ENCODE measurements at regions of chr11 and their contacts with region 1.

Region 1: DNA sequence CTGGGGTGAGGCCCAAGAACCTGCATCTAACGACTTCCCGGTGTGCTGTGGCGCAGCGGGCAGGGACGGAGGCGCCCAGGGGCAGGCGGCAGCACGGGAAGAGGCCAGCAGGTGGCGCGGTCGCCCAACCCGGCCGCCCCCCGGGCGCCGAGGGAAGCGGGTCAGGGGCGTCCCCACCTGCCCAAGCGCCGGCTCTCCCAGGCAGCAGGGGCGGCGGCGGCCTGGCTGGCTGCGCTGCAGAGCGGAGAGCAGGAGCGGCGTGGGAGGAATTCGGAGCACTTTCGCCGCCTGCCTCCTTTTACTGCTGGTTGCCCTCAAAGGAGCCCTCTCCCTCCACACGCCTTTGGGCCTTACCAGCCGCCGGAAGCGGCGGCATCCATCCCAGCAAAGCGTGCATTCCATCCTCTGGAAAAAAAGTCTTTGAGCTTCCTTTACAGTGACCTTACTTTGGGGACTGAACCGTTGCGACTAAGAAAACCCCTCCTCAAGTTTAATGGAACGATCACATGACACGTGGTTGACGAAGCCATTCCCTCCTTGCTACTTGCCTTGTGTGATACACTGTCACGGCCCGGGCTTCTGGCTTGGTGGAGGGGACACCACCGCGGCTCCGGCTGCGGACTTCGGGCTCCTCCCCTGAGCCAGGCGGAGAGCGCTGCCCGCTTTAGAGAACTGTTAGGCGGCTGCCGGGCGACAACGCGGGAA is 106.8 kb upstream of the CLMP start:
- DNase-seq: peak; percentile 58
- ATAC-seq: peak; percentile 93 to 94

Region 2: DNA sequence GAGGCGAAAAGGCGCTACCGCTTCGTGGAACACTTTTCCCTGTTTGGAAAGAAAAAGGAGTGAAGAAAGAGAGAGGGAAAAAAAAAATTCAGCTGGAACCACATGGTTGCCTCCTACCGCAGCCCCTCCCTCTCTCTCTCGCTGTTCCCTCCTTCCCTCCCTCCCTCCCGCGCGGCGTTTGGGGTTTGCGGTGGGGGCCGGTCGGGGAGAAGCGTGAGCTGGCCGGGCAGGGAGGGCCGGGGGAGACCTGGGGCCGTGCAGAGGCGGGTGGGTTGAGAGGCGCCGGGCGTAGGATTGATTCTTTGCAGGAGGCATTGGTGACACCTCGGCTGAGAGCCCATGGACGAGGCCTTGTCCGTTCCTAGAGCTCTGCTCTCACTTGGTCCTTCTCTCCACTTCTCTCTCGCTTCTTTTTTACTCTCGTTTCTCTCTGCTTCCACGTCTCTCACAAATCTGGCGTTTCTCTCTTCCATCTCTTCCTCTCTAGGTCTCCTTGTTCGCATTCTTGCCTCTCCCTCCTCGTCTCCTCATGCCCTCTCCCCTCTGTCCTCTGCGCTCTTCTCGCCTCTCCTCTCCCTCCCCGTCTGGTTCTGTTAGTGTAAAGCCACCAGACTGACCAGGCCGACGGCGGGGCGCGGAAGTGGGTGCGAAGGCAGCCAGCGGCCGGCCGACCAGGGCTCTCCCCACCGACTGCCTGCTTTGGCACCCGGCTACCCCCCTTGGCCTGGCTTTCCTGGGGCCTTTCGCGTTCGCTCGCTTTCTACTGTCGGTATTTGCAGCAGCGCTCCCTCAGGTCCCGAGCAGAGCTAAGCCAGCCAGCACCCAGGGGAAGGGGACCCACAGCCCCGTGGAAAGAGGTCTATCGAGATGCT is 106.4 kb before region 1 on chr11 and contains the start of gene CLMP:
- intact Hi-C with region 1: no loop called
- DNase-seq: peak; percentile 57
- ATAC-seq: peak; percentile 76 to 85
- total RNA-seq, gene CLMP: 30.6 to 38.6 TPM

Region 3: DNA sequence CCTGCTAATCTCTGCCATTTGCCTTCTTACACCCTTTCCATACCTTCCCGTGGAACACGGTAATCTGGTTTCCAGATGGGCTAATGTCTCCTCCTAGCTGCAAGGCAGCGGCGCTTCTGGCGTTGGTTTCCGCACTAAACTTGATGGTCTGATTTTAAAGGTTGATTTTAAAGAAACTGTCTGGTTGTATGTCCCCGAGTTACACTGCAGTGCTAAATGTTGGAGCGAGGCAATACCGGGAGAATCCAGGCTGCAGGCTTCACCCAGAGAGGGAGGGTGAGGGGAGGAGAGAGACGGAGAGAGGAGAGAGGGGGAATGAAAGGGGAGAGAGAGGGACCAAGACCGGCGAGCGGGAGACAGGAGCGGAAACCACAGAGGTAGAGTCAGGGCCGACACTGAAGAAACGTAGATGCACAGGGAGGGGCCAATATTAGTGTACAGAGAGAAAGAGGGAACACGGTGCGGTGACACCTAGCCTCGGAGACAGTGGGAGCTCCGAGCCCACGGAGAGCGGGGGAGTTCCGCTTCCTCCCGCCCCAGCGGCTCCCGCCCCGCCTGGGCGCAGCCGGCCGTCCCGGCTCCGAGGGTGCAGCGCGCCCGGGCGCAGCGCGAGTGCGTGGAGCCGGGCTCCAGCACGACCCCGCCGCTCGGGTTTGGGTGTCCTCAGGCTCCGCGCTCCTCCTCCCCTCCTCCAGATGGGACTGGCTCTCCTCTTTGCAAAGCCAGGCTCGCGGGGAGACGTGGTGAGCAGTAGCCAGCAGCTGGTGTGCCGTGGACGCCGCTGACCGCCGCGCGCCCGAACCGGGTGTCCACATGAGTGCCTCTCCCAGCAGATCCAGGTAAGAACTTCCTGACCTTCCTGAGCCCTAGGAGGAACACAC is 56.4 kb after region 1 on chr11:
- intact Hi-C with region 1: loop called in 1 of 2 experiments (anchors 2 kb)
- DNase-seq: no peak
- ATAC-seq: peak; percentile 63 to 70

Region 4: GRCh38 chr11:123373754-123374621 is 72.1 kb after region 1 on chr11:
- intact Hi-C with region 1: no loop called
- DNase-seq: no peak
- ATAC-seq: no peak

Region 5: DNA sequence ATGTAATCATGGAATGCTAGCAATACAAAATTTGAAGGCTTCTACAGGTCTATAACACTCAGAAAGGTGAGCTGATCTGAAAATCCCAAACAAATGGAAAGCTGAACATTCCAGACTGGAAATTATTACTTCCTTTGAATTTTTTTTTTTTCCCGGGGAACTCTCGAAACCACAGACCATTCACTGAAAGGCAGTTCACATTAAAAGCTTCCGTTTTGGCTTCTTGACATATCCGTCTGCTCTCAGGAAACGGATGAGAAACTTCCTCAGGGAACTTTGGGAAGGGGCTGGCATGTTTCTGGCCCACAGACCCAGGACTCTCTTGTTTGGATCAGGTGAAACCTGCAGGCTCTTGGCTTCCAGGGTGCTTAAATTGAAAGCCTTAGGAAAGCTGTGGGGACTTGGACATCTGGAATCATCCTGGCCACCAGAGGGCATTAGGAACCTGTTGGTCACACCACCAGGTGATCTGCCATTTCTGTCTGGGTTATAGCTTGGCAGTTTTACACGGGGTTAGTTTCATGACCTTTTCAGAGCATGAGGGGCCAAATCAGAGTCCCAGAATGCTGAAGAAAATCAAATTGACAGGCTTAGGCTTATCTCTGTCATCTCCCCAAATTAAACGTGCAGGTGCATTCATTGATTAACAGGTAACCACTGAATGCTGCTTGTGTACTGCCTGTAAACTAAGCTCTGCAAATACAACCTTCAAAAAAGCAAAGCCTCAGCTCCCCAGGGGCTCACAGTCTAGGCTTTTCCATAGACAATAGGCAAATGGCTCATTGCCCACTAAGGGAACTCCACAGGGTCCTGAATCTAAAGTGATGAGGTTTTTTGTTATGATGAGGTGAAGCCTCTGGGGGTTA is 105.5 kb after region 1 on chr11:
- intact Hi-C with region 1: loop called in 1 of 2 experiments (anchors 10 kb)
- DNase-seq: peak; percentile 68
- ATAC-seq: peak; percentile 55 to 60

Region 6: DNA sequence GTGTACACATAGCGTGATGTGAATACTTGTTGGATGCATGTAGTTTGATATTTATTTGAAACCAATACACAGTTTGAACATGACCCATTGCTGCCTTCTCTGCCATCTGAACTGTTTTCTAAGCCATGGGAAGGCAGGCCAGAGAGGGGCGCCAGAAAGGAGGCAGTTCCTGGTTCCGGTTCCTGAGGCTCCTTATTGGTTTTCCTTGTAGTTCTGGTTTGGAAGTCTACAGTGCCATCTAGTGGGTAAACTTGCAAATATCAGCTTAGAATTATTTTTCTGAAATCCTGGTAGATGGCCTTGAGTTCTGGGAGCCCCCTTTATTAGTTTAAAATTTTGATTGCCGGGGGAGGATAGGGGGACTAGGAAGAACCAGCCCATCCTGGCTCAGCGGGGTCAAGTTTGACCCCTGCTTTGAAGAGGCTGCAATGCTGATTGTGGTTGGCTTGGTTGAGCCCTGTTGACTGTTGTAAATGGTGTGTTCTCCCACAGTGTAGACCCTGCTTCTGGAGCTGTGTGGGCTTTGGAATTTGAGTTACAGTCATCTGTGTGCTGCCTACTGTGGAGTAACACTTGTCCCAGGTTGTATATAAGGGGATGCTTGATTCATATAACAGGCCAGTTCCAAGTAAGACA is 176.6 kb after region 1 on chr11:
- intact Hi-C with region 1: loop called (anchors 2 to 5 kb)
- DNase-seq: peak; percentile 61
- ATAC-seq: peak; percentile 71 to 83